PC-9 (cell line): ENCODE measurements at regions of chr2 and their contacts with region 1.

Region 1: GRCh38 chr2:61470965-61471904 is at the start of gene USP34:
- DNase-seq: peak; percentile 81 to 90
- H3K4me3 ChIP-seq: peak within 1 kb of the TSS; percentile 79
- H3K27ac ChIP-seq: peak within 1 kb of the TSS; percentile 80
- H3K4me1 ChIP-seq: peaks cover 18% of the 10 kb centered on the region
- H3K27me3 ChIP-seq: no peaks in the 10 kb centered on the region
- CTCF ChIP-seq: no peak
- total RNA-seq, gene USP34: 85.4 and 120 TPM in 2 replicates

Region 2: DNA sequence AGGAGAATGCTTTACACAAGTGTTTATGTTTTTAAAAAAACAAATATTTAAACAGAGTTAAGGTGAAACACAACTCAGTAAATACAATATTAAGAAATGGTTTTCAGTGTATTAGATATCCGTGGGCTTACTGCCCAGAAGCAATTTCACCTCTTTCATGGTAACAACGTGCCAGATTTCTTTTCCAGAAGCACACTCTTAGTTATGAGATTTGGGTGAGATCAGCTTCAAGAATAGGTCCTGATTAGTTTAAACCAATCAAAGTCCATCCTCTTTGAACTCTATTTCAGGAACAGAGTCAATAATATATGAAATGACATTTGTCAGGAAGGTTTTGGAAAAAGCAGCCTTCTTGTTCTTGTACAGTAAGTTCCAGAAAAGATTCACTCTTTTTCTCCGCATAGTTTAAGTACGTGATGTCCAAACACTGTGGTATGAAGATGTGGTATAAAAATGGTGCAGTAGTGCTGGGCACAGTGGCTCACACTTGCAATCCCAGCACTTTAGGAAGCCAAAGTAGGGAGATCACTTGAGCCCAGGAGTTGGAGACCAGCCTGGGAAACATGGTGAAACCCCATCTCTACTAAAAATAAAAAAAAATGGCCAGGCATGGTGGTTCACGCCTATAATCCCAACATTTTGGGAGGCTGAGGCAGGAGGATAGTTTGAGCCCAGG is 15.0 kb before region 1 on chr2:
- CTCF ChIA-PET with region 1: no interaction called
- POLR2A ChIA-PET with region 1: interaction called, 30 read pairs
- intact Hi-C with region 1: no loop called
- DNase-seq: no peak
- H3K4me3 ChIP-seq: no peak overlapping the region
- H3K27ac ChIP-seq: 0 out of 2 replicates have a peak overlapping the region, but pooled peaks have one; percentile 13
- H3K4me1 ChIP-seq: no peaks in the 10 kb centered on the region
- H3K27me3 ChIP-seq: no peaks in the 10 kb centered on the region
- CTCF ChIP-seq: no peak